AG04450 (cell line): ENCODE measurements at regions of chr14 and their contacts with region 1.

Region 1: GRCh38 chr14:96666088-96666487 is 131.1 kb upstream of the VRK1 start:
- DNase-seq: no peak
- H3K4me3 ChIP-seq: no peak overlapping the region
- H3K27ac ChIP-seq: no peak overlapping the region
- H3K27me3 ChIP-seq: peaks cover 10% of the 10 kb centered on the region
- CTCF ChIP-seq: no peak

Region 2: DNA sequence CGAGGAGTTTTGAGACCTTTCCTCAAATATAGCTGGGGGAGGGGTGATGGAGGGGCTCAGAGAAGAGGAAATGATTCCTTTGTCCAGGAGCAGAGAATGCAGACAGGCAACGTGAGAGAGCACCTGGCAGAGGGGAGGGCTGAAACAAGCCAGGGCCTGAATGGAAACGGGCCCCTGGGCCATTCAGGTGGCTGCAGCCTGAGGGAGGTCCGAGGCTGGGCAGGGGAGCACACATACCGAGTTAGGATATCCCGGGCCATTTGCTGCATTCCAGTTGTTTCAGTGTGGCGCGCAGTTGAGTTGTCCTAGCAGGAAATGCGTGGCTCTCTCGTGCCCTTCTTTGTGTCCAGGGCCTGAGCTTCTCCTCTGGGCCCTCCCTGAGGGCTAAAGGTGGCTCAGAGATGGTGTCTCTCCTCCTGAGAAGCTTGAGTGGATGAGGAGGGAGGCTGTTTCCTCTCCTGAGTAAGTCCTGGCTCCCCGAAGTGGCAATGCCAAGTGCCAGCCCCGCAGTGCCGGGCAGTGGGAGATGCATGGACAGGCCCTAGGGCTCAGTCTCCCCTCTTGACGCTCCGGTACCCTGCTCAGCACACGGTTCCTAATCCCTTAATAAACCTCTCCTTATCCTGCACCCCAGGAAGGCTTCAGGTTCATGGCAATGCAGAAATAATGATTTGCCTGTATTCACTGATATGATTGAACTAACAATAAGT is 45.6 kb after region 1 on chr14:
- CTCF ChIA-PET with region 1: interaction called, 17 read pairs
- POLR2A ChIA-PET with region 1: no interaction called
- DNase-seq: no peak
- H3K4me3 ChIP-seq: no peak overlapping the region
- H3K27ac ChIP-seq: no peak overlapping the region
- H3K27me3 ChIP-seq: peaks cover 2% of the 10 kb centered on the region
- CTCF ChIP-seq: no peak